IMR-90 (cell line): ENCODE measurements at regions of chr1 and their contacts with region 1.

Region 1: GRCh38 chr1:42816585-42817434 is at the starts of genes ERMAP and SVBP:
- DNase-seq: peak; percentile 77
- ATAC-seq: peak; percentile 96
- H3K4me3 ChIP-seq: peak within 1 kb of the TSS; percentile 94
- H3K27ac ChIP-seq: peak within 1 kb of the TSS; percentile 100
- H3K4me1 ChIP-seq: peaks cover 2% of the 10 kb centered on the region; the same call in 1 of the 2 replicates
- H3K27me3 ChIP-seq: no peaks in the 10 kb centered on the region
- CTCF ChIP-seq: no peak
- POLR2A ChIP-seq: peak; percentile 86
- RAD21 ChIP-seq: no peak
- total RNA-seq, gene ERMAP: 5.0 and 5.6 TPM in 2 replicates
- total RNA-seq, gene SVBP: 9.7 and 12.2 TPM in 2 replicates

Region 2: GRCh38 chr1:42766741-42767509 is 49.9 kb before region 1 on chr1 and contains the starts of genes C1orf50 and P3H1:
- CTCF ChIA-PET with region 1: interaction called, 4 read pairs
- POLR2A ChIA-PET with region 1: interaction called, 3 read pairs
- dilution Hi-C with region 1: no loop called
- in situ Hi-C with region 1: no loop called
- intact Hi-C with region 1: loop called (anchors 5 kb)
- DNase-seq: peak; percentile 98
- ATAC-seq: peak; percentile 92
- H3K4me3 ChIP-seq: peak within 1 kb of the TSS; percentile 77
- H3K27ac ChIP-seq: peak within 1 kb of the TSS; percentile 79
- H3K4me1 ChIP-seq: no peaks in the 10 kb centered on the region; the same call in 1 of the 2 replicates
- H3K27me3 ChIP-seq: no peaks in the 10 kb centered on the region
- CTCF ChIP-seq: no peak; the same call in 1 of the 2 replicates
- POLR2A ChIP-seq: peak; percentile 83
- RAD21 ChIP-seq: no peak
- total RNA-seq, gene C1orf50: 2.0 and 3.9 TPM in 2 replicates
- total RNA-seq, gene P3H1: 85.3 and 108 TPM in 2 replicates